ENCODE measurements at regions of chr14 and their contacts with region 1.

Region 1: GRCh38 chr14:50260511-50260910 is 29.1 kb upstream of the SOS2 start:
- DNase-seq: peak; percentile 46
- ATAC-seq: peak; percentile 61
- H3K4me3 ChIP-seq: no peak overlapping the region
- H3K4me3 Mint-ChIP-seq: no peak overlapping the region
- H3K27ac ChIP-seq: no peak overlapping the region
- H3K27ac Mint-ChIP-seq: no peak overlapping the region
- H3K4me1 ChIP-seq: no peaks in the 10 kb centered on the region
- H3K4me1 Mint-ChIP-seq: peaks cover 3% of the 10 kb centered on the region
- H3K27me3 ChIP-seq: no peaks in the 10 kb centered on the region
- H3K27me3 Mint-ChIP-seq: no peaks in the 10 kb centered on the region
- CTCF ChIP-seq: peak; percentile 67

Region 2: DNA sequence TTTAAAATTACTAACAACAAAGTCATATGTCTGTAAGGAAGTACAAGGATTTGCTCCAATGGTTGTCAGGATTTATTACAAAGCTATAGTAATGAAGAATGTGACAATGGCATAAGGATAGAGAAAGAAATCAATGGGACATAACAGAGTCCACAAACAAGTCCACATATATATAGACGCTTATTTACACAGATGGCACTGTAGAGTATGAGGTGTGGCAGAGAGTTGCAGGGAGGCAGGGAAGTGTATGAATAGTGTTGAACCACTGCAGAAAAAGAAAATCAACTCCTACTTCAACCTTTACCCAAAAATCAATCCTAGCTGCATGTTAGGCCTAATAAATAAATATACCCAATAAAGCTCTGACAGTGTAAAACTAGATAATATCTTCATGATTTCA is 50.4 kb before region 1 on chr14:
- CTCF ChIA-PET with region 1: no interaction called
- POLR2A ChIA-PET with region 1: no interaction called
- intact Hi-C with region 1: loop called (anchors 10 kb)
- DNase-seq: no peak
- ATAC-seq: no peak
- H3K4me3 ChIP-seq: no peak overlapping the region
- H3K4me3 Mint-ChIP-seq: no peak overlapping the region
- H3K27ac ChIP-seq: no peak overlapping the region
- H3K27ac Mint-ChIP-seq: no peak overlapping the region
- H3K4me1 ChIP-seq: no peaks in the 10 kb centered on the region
- H3K4me1 Mint-ChIP-seq: peaks cover 6% of the 10 kb centered on the region
- H3K27me3 ChIP-seq: no peaks in the 10 kb centered on the region
- H3K27me3 Mint-ChIP-seq: no peaks in the 10 kb centered on the region
- CTCF ChIP-seq: no peak

Region 3: GRCh38 chr14:50667996-50668825 is 407.7 kb after region 1 on chr14 and contains the start of gene SAV1:
- CTCF ChIA-PET with region 1: no interaction called
- POLR2A ChIA-PET with region 1: no interaction called
- intact Hi-C with region 1: no loop called
- DNase-seq: peak; percentile 80
- ATAC-seq: peak; percentile 63
- H3K4me3 ChIP-seq: peak within 1 kb of the TSS; percentile 47 to 93 (median 70)
- H3K4me3 Mint-ChIP-seq: no peak within 1 kb of the TSS
- H3K27ac ChIP-seq: peak within 1 kb of the TSS; percentile 83 to 91
- H3K27ac Mint-ChIP-seq: no peak within 1 kb of the TSS
- H3K4me1 ChIP-seq: peaks cover 22 to 42% of the 10 kb centered on the region in 2 donors
- H3K4me1 Mint-ChIP-seq: peaks cover 26% of the 10 kb centered on the region
- H3K27me3 ChIP-seq: no peaks in the 10 kb centered on the region
- H3K27me3 Mint-ChIP-seq: no peaks in the 10 kb centered on the region
- CTCF ChIP-seq: no peak
- total RNA-seq, gene SAV1: 36.1 and 39.7 TPM in 2 replicates

Measured in B cell (primary cell).